ENCODE measurements at regions of chr6 and their contacts with region 1.

Region 1: GRCh38 chr6:157756708-157757429 is 66.2 kb upstream of the SNX9 start:
- DNase-seq: peak; percentile 56 to 72
- ATAC-seq: peak; percentile 87 to 91
- H3K4me3 ChIP-seq: peak overlapping the region in 1 of 4 donors; percentile 12
- H3K27ac ChIP-seq: peak overlapping the region in 1 of 4 donors; percentile 18
- H3K4me1 ChIP-seq: peaks cover 0 to 10% of the 10 kb centered on the region in 2 donors
- H3K27me3 ChIP-seq: no peaks in the 10 kb centered on the region
- CTCF ChIP-seq: peak; percentile 74 to 84 (median 81)
- POLR2A ChIP-seq: no peak

Region 2: DNA sequence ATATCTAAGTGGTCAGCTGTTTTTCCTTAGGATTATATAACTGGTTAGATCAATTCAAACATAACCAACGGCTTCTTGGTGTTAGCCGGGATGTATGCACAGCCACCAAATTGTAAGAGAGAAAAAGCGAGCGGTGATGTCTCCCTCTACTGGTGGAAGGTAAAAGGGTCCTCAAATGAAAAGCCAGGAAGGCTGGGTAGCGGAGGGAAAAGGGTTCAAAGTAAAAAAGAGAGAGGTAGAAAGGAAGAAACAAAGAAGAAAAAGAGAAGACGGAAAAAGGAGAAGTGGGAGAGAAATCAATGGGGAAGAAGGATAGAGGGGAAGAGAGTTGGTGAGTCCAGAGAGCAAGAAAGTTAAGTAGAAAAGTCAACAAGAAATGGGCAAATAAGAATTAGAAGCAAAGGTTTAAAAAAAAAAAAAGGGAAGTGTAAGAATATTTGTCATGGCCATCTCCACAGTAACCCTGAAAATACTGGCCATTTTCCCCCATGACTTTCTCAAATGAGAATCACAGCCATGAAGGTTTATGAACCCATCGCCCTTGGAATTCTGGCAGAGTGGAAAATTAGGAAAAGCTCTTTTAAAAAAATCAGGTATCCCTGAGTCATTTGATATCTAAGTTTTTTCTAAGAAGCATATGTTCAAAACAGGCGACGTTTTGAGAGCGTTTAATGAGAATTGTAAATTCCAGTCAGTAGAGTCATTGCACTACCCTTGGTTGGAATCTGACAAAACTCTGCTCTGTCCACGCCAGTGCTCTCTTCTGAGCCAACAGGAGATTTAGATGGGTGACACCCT is 89.5 kb before region 1 on chr6:
- in situ Hi-C with region 1: no loop called
- intact Hi-C with region 1: loop called (anchors 5 kb)
- DNase-seq: no peak
- ATAC-seq: peak; percentile 61 to 77
- H3K4me3 ChIP-seq: no peak overlapping the region
- H3K27ac ChIP-seq: no peak overlapping the region
- H3K4me1 ChIP-seq: peaks cover 28 to 31% of the 10 kb centered on the region in 2 donors
- H3K27me3 ChIP-seq: no peaks in the 10 kb centered on the region
- CTCF ChIP-seq: peak; percentile 64 to 89 (median 69)
- POLR2A ChIP-seq: no peak

Region 3: GRCh38 chr6:157873735-157874344 is 117.0 kb after region 1 on chr6:
- in situ Hi-C with region 1: loop called (anchors 5 to 10 kb)
- intact Hi-C with region 1: loop called (anchors 1 kb)
- DNase-seq: peak; percentile 25 to 60
- ATAC-seq: peak in 1 of 2 donors; percentile 74
- H3K4me3 ChIP-seq: no peak overlapping the region
- H3K27ac ChIP-seq: no peak overlapping the region
- H3K4me1 ChIP-seq: no peaks in the 10 kb centered on the region
- H3K27me3 ChIP-seq: no peaks in the 10 kb centered on the region
- CTCF ChIP-seq: peak; percentile 58 to 83 (median 79)
- POLR2A ChIP-seq: no peak

Region 4: GRCh38 chr6:157879873-157880254 is 123.0 kb after region 1 on chr6:
- in situ Hi-C with region 1: loop called in 2 of 4 experiments (anchors 5 to 10 kb)
- intact Hi-C with region 1: no loop called
- DNase-seq: no peak
- ATAC-seq: no peak
- H3K4me3 ChIP-seq: no peak overlapping the region
- H3K27ac ChIP-seq: no peak overlapping the region
- H3K4me1 ChIP-seq: no peaks in the 10 kb centered on the region
- H3K27me3 ChIP-seq: no peaks in the 10 kb centered on the region
- CTCF ChIP-seq: no peak
- POLR2A ChIP-seq: no peak

Measured in gastrocnemius medialis (tissue), 4 donors.